IMR-90 (cell line): ENCODE measurements at regions of chr5 and their contacts with region 1.

Region 1: DNA sequence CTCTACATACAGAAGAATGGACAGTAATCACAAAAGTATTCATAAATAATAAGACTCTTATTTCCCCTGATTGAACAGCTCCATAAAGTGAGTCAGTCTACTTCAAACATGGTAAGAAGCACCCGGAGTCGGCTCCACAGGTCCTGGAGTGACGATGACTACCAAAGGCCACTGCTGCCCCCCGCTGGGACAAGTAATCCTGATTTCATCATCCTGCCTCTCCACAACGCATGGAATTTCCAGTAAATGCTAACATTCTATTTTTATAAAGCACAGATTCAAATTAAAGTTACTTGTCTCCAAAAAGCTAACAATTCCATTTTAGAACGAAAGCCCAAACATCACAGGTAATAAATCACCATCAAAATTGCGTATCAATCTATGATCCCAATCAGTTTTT is 16.2 kb downstream of the ATPSCKMT start:
- DNase-seq: peak; percentile 97
- ATAC-seq: peak; percentile 97
- H3K4me3 ChIP-seq: no peak overlapping the region
- H3K27ac ChIP-seq: peak overlapping the region; percentile 69
- H3K4me1 ChIP-seq: peaks cover 14% of the 10 kb centered on the region
- H3K27me3 ChIP-seq: no peaks in the 10 kb centered on the region
- CTCF ChIP-seq: peak; percentile 73
- POLR2A ChIP-seq: 0 out of 2 replicates have a peak, but pooled peaks have one; percentile 35
- RAD21 ChIP-seq: peak; percentile 88

Region 2: DNA sequence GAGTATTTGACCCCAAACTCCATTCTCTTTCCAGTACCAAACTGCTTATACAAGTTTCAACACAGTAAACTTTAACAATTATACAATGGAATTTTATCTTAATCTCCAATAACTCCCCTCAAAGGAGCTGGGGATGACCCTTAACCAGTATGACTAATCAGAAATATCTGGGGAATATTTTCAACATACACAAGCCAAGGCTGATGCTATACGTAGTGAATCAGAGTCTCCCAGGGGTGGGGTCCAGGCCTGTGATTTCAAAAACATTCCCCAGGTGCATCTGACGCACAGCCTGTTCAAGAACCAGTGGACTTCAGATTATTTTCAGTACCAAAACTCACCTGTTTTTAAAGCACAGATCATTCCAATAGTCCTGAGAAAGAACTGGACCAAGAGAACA is 675.8 kb before region 1 on chr5:
- CTCF ChIA-PET with region 1: no interaction called
- POLR2A ChIA-PET with region 1: no interaction called
- dilution Hi-C with region 1: no loop called
- in situ Hi-C with region 1: loop called (anchors 10 kb)
- intact Hi-C with region 1: no loop called
- DNase-seq: peak; percentile 82
- ATAC-seq: peak; percentile 87
- H3K4me3 ChIP-seq: no peak overlapping the region
- H3K27ac ChIP-seq: no peak overlapping the region
- H3K4me1 ChIP-seq: peaks cover 2% of the 10 kb centered on the region; the same call in 1 of the 2 replicates
- H3K27me3 ChIP-seq: no peaks in the 10 kb centered on the region
- CTCF ChIP-seq: no peak
- POLR2A ChIP-seq: no peak
- RAD21 ChIP-seq: no peak

Region 3: DNA sequence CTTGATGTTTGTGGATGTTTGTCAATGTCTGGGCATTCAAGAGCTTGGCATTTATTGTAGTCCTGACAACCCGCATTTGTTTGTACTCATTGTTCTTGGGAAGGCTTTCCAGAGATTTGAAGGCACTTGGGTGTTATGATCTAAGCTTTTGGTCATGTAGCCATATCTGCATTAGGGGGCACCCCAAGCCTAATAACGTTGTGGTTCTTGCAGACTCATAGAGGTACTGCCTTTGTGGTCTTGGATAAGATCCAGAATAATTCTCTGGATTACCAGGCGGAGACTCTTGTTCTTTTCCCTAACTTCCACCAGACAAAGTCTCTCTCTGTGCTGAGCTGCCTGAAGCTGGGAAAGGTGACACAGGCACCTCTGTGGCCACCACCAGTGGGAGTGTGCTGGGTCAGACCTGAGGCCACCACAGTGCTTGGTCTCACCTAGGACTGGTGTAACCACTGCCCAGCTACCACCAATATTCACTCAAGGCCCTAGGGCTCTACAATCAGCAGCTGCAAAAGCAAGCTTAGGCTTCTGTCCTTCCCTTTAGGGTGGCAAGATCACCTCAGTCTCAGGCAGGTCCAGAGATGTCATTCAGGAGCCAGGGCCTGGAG is 458.9 kb before region 1 on chr5:
- CTCF ChIA-PET with region 1: no interaction called
- POLR2A ChIA-PET with region 1: no interaction called
- dilution Hi-C with region 1: no loop called
- in situ Hi-C with region 1: loop called (anchors 10 kb)
- intact Hi-C with region 1: loop called (anchors 1 kb)
- DNase-seq: peak; percentile 84
- ATAC-seq: peak; percentile 44; the same call in 1 of the 2 replicates
- H3K4me3 ChIP-seq: no peak overlapping the region
- H3K27ac ChIP-seq: peak overlapping the region; percentile 61
- H3K4me1 ChIP-seq: peaks cover 8% of the 10 kb centered on the region
- H3K27me3 ChIP-seq: no peaks in the 10 kb centered on the region
- CTCF ChIP-seq: peak; percentile 63
- POLR2A ChIP-seq: no peak
- RAD21 ChIP-seq: peak; percentile 75

Region 4: GRCh38 chr5:9951866-9952516 is 281.5 kb before region 1 on chr5:
- CTCF ChIA-PET with region 1: no interaction called
- POLR2A ChIA-PET with region 1: no interaction called
- dilution Hi-C with region 1: no loop called
- in situ Hi-C with region 1: no loop called
- intact Hi-C with region 1: no loop called
- DNase-seq: no peak
- ATAC-seq: no peak
- H3K4me3 ChIP-seq: no peak overlapping the region
- H3K27ac ChIP-seq: no peak overlapping the region
- H3K4me1 ChIP-seq: no peaks in the 10 kb centered on the region
- H3K27me3 ChIP-seq: peaks cover 13% of the 10 kb centered on the region
- CTCF ChIP-seq: no peak
- POLR2A ChIP-seq: no peak
- RAD21 ChIP-seq: no peak

Region 5: DNA sequence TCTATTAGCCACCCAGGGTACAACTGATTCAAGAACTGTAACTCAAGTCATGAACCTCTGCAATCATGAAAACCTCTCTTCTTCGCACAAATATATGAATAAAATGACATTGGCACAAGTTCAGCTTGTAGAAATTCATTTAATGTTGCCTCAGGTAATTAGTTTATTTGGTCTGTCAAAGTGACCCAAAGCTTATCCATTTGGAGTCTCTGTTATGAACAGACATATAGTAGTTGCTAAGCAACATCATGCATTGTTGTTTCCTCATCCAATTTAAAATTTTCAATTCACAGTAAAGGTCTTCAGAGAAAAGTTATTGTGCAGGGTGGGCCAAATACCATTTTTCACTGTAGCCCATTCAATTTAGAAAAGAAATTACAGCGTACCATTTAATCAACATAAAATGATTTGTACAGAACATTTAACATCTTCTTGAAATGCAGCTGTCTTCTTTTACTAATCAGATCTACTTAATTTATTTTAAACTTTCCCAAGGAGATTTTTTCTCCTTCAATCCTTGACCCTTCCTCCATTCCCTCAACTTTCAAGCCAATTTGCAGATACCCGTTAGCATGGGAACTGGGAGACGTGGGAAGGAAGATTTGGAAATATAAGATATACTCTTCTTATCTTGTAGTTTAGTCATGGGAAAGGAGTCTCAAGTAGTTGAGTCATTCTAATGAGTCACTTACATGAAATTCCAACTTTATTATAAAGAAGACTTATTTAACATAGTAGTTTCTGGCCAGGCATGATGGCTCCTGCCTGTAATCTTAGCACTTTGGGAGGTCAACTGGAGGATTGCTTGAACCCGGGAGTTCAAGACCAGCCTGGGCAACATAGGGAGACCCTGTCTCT is 215.1 kb before region 1 on chr5:
- CTCF ChIA-PET with region 1: no interaction called
- POLR2A ChIA-PET with region 1: no interaction called
- dilution Hi-C with region 1: no loop called
- in situ Hi-C with region 1: no loop called
- intact Hi-C with region 1: loop called (anchors 1 kb)
- DNase-seq: peak; percentile 96
- ATAC-seq: peak; percentile 89
- H3K4me3 ChIP-seq: no peak overlapping the region
- H3K27ac ChIP-seq: peak overlapping the region; percentile 85
- H3K4me1 ChIP-seq: peaks cover 13% of the 10 kb centered on the region
- H3K27me3 ChIP-seq: no peaks in the 10 kb centered on the region
- CTCF ChIP-seq: no peak
- POLR2A ChIP-seq: no peak
- RAD21 ChIP-seq: no peak

Region 6: DNA sequence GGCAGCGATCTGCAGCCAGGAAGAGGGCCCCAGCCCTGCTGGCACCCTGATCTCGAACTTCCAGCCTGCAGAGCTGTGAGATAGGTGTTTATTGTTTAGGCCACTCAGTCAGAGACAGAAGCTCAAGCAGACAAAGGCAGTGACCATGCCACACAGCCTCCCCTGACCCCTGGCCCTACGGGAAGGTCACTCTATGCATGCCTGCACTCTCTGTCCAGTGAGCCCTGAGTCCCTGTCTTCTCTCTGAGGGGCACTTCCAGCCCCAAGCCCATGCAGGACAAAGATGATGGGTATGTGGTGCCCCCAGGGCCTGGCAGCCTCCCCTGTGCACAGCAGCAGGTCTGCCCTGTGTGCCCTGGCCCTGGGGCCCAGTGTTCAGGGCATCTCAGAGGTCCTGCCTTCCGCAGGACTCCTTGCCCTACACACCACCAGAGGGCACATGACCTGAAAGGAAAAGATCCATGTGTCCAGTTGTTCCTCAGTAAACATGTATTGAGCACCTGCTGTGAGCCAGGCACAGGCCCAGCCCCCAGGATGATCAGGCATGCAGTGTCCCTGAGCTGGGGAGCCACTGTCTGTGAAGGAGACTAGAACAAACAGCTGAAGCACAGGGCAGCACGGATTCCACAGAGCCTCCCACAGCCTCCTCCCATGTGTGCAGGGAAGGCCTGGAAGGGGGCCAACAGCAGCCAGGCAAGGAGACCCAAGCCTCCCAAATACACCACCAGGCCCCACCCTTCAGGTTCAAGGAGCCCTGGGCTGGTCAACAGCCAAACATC is 93.1 kb before region 1 on chr5:
- CTCF ChIA-PET with region 1: no interaction called
- POLR2A ChIA-PET with region 1: no interaction called
- dilution Hi-C with region 1: no loop called
- in situ Hi-C with region 1: no loop called
- intact Hi-C with region 1: loop called (anchors 1 kb)
- DNase-seq: peak; percentile 7
- ATAC-seq: no peak
- H3K4me3 ChIP-seq: no peak overlapping the region
- H3K27ac ChIP-seq: no peak overlapping the region
- H3K4me1 ChIP-seq: no peaks in the 10 kb centered on the region
- H3K27me3 ChIP-seq: no peaks in the 10 kb centered on the region
- CTCF ChIP-seq: peak; percentile 22; the same call in 1 of the 2 replicates
- POLR2A ChIP-seq: no peak
- RAD21 ChIP-seq: peak; percentile 32